CD8-positive, alpha-beta T cell (primary cell): ENCODE measurements at regions of chr20 and their contacts with region 1.

Region 1: DNA sequence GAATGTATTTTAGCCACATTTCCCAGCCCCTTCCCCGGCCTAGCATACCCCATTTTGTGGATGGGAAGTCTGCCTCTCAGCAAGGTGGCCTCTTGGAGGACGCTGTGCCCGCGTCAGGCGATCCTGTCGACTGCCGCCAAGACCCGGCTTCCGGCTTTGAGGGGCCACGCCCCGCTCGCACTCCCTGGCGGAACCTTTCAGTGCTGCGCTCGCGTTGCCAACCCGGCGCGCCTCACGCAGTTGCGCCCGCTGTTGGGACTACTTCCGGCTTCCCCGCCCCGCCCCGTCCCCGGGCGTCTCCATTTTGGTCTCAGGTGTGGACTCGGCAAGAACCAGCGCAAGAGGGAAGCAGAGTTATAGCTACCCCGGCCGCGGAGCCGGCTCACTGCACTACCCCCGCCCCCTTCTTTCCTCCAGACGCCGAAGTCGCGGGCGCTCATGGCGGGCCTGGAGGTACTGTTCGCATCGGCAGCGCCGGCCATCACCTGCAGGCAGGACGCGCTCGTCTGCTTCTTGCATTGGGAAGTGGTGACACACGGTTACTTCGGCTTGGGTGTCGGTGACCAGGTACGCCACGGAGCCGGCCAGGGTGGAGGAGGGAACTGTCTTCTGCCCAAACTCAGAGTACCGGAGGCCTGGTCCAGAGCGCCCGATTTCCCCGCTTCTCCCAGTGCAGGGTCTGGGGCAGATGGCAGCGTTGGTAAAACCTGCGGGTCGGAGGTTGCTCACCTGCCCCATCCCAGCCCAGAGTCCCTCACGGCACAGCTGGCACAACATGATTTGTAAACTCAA is at the start of gene PSMF1:
- DNase-seq: peak; percentile 91 to 98 (median 96)
- ATAC-seq: peak; percentile 89
- H3K4me3 ChIP-seq: peak within 1 kb of the TSS; percentile 84 to 98
- H3K4me3 Mint-ChIP-seq: peak within 1 kb of the TSS; percentile 92
- H3K27ac ChIP-seq: peak within 1 kb of the TSS; percentile 71 to 87
- H3K27ac Mint-ChIP-seq: peak within 1 kb of the TSS; percentile 93
- H3K4me1 ChIP-seq: peaks cover 49% of the 10 kb centered on the region
- H3K4me1 Mint-ChIP-seq: peaks cover 61% of the 10 kb centered on the region
- H3K27me3 ChIP-seq: no peaks in the 10 kb centered on the region
- H3K27me3 Mint-ChIP-seq: no peaks in the 10 kb centered on the region
- CTCF ChIP-seq: no peak
- total RNA-seq, gene PSMF1: 86.4 to 87.8 TPM

Region 2: DNA sequence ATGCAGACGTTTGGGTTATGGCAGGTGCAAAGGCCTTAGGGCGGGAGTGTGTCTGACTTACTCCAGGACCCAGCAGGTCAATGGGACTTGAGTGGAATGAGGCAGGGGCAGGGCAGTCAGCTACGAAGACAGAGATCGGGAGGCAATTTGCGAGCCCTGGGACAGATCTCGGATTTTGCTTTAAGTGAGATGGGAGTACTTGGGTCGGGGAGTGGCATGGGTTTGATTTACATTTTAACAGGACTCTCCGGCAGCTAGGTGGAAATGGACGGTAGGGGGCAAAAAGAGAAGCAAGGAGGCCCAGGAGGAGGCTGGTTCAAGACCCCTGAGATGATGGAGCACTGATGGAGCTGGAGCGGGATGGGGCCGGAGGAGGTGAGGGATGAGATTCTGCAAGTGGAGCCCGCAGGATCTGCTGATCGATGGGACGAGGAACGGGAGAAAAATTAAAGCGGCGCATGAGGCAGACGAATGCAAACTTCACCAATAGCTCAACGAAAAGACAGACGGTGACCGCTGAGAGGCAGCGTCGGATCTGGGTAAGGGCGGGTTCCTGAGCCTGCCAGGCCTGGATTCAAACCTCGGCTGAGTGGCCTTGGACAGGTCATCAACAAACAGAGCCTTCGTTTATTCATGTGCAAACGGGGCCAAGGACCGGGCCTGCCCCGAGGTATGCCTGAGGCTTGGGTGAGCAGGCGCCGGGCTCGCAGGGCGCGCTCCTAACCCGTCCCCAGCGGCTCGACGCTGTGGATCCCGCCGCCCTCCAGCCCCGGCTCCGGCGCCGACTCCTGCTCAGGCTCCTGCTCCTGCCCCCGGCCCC is 711.2 kb before region 1 on chr20:
- CTCF ChIA-PET with region 1: no interaction called
- POLR2A ChIA-PET with region 1: no interaction called
- intact Hi-C with region 1: loop called (anchors 5 to 10 kb)
- DNase-seq: peak in 7 of 9 experiments; percentile 48 to 83 (median 68)
- ATAC-seq: peak; percentile 71
- H3K4me3 ChIP-seq: peak overlapping the region; percentile 56 to 71
- H3K4me3 Mint-ChIP-seq: peak overlapping the region; percentile 91
- H3K27ac ChIP-seq: peak overlapping the region; percentile 9 to 41
- H3K27ac Mint-ChIP-seq: peak overlapping the region; percentile 95
- H3K4me1 ChIP-seq: peaks cover 34% of the 10 kb centered on the region
- H3K4me1 Mint-ChIP-seq: peaks cover 47% of the 10 kb centered on the region
- H3K27me3 ChIP-seq: no peaks in the 10 kb centered on the region
- H3K27me3 Mint-ChIP-seq: no peaks in the 10 kb centered on the region
- CTCF ChIP-seq: peak; percentile 45

Region 3: GRCh38 chr20:833450-834150 is 284.9 kb before region 1 on chr20 and contains the start of gene FAM110A:
- CTCF ChIA-PET with region 1: no interaction called
- POLR2A ChIA-PET with region 1: no interaction called
- intact Hi-C with region 1: loop called (anchors 1 kb)
- DNase-seq: peak; percentile 89 to 99 (median 96)
- ATAC-seq: peak; percentile 96
- H3K4me3 ChIP-seq: peak within 1 kb of the TSS; percentile 90 to 96
- H3K4me3 Mint-ChIP-seq: peak within 1 kb of the TSS; percentile 91
- H3K27ac ChIP-seq: peak within 1 kb of the TSS; percentile 85 to 96
- H3K27ac Mint-ChIP-seq: peak within 1 kb of the TSS; percentile 82
- H3K4me1 ChIP-seq: peaks cover 27% of the 10 kb centered on the region
- H3K4me1 Mint-ChIP-seq: peaks cover 43% of the 10 kb centered on the region
- H3K27me3 ChIP-seq: no peaks in the 10 kb centered on the region
- H3K27me3 Mint-ChIP-seq: no peaks in the 10 kb centered on the region
- CTCF ChIP-seq: no peak
- total RNA-seq, gene FAM110A: 6.7 to 7.7 TPM

Region 4: DNA sequence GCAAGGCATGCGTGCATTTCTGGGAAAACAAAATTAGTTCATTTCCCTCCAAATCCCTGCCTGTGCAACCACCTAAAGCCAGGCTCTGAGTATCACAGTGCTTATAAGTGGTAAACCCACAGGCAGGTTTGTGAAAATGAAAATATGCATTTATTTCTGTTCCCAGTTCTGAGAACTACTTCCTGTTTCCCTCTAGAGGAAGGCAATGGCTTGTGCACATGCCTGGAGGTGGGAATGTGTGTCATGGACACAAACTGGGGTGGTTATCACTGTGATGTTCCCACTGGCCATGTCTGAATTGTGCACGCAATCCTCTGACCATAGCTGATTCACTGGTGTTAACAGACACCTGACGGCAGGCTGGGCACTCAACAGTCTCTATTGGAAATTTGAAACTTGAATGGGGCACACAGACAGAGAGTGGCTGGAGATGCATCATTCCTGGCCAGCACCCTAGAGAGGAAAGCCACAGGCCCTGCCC is 258.7 kb before region 1 on chr20:
- CTCF ChIA-PET with region 1: no interaction called
- POLR2A ChIA-PET with region 1: no interaction called
- intact Hi-C with region 1: no loop called
- DNase-seq: no peak
- ATAC-seq: no peak
- H3K4me3 ChIP-seq: no peak overlapping the region
- H3K4me3 Mint-ChIP-seq: no peak overlapping the region
- H3K27ac ChIP-seq: no peak overlapping the region
- H3K27ac Mint-ChIP-seq: no peak overlapping the region
- H3K4me1 ChIP-seq: peaks cover 29% of the 10 kb centered on the region
- H3K4me1 Mint-ChIP-seq: peaks cover 40% of the 10 kb centered on the region
- H3K27me3 ChIP-seq: no peaks in the 10 kb centered on the region
- H3K27me3 Mint-ChIP-seq: no peaks in the 10 kb centered on the region
- CTCF ChIP-seq: no peak

Region 5: GRCh38 chr20:1108437-1108920 is 10.1 kb before region 1 on chr20:
- CTCF ChIA-PET with region 1: interaction called, 15 read pairs
- POLR2A ChIA-PET with region 1: interaction called, 4 read pairs
- intact Hi-C with region 1: no loop called
- DNase-seq: peak; percentile 22 to 70 (median 52)
- ATAC-seq: peak; percentile 82
- H3K4me3 ChIP-seq: no peak overlapping the region
- H3K4me3 Mint-ChIP-seq: no peak overlapping the region
- H3K27ac ChIP-seq: no peak overlapping the region
- H3K27ac Mint-ChIP-seq: no peak overlapping the region
- H3K4me1 ChIP-seq: no peaks in the 10 kb centered on the region
- H3K4me1 Mint-ChIP-seq: peaks cover 4% of the 10 kb centered on the region
- H3K27me3 ChIP-seq: no peaks in the 10 kb centered on the region
- H3K27me3 Mint-ChIP-seq: no peaks in the 10 kb centered on the region
- CTCF ChIP-seq: peak; percentile 62

Region 6: DNA sequence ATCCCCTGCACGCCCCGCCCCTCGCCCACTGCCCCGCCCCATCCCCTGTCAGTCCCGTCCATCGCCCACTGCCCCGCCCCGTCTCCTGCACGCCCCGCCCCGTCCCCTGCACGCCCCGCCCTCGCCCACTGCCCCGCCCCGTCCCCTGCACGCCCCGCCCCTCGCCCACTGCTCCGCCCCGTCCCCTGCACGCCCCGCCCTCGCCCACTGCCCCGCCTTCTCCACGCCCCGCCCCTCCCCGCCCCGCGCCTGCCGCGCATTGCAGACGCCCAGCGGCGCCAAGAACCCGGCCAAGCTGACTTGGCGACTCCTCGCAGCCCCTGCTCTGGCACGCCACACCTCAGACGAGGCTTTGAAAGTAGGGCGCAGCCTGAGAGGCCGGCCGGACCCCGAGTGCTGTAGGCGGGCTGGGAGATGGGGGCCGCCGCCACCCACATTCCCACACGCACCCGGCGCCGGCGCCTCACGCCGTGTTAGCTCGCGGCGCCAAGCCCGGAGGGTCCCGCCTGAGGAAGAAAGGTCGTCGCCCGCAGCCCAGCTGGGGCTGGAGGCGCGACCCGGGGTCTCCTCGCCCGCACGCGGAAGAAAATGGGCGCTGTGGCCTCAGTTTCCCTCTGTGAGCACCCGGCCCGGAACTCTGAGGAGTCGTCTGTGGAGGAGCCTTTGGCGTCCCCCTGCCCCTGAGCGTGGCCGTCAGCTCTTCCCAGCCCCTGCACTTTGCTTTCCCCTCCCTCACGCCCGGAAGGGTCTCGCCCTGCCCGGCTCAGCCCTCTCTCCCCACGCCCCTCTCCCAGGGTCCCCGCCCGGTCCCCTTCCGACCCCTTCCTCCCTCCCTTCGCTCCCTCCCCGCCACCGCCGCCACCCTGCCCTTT is 107.5 kb after region 1 on chr20 and contains the start of gene RAD21L1:
- CTCF ChIA-PET with region 1: no interaction called
- POLR2A ChIA-PET with region 1: no interaction called
- intact Hi-C with region 1: loop called (anchors 1 to 2 kb)
- DNase-seq: peak; percentile 63 to 85 (median 80)
- ATAC-seq: peak; percentile 93
- H3K4me3 ChIP-seq: peak within 1 kb of the TSS; percentile 64 to 82
- H3K4me3 Mint-ChIP-seq: peak within 1 kb of the TSS; percentile 87
- H3K27ac ChIP-seq: peak within 1 kb of the TSS in 1 of 2 experiments; percentile 44
- H3K27ac Mint-ChIP-seq: no peak within 1 kb of the TSS
- H3K4me1 ChIP-seq: peaks cover 9% of the 10 kb centered on the region
- H3K4me1 Mint-ChIP-seq: peaks cover 18% of the 10 kb centered on the region
- H3K27me3 ChIP-seq: peaks cover 0 to 8% of the 10 kb centered on the region in 2 experiments
- H3K27me3 Mint-ChIP-seq: peaks cover 13% of the 10 kb centered on the region
- CTCF ChIP-seq: no peak
- total RNA-seq, gene RAD21L1: not detected

Region 7: DNA sequence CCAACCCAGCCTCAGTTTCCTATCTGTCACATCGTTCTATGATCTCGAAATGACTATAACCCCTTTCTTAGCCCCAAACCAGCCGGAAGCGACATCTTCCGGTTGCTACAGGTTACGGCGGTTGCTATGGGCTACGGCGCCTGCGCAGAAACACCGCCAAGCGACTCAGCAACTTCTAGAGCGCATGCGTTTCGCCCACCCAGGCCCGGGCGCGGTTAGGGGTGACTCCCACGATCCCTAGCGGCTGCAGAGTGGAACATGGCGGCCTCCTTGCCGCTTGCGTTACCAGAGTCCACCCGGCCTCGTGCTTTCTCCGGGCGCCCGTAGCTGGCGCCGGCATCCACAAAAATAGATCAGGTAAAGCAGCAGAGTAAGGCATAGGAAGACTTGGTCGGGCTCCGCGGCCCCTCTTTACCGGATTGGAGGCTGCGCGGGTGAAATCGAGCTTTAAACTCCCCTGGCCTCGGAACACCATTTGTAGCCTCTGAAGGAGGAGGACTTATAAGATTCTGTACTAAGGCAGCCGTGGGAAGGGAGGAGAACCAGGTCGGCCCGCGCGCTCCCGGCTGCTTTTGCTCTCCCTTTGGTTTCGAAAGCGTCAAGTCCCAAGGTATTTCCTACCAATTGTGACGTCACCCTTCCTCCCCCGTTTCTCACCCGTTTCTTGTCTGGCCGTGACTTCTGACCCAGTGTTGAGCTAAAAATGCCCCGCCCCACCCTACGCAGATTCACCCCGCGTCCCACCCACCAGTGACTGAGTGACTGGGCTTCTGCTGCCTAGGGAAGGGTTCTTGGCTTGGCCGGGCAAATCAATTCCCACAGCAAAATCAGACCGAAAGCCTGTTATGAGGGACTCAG is 206.9 kb after region 1 on chr20:
- CTCF ChIA-PET with region 1: no interaction called
- POLR2A ChIA-PET with region 1: no interaction called
- intact Hi-C with region 1: loop called (anchors 1 kb)
- DNase-seq: peak; percentile 98 to 100 (median 99)
- ATAC-seq: peak; percentile 86
- H3K4me3 ChIP-seq: peak overlapping the region; percentile 81 to 97
- H3K4me3 Mint-ChIP-seq: no peak overlapping the region
- H3K27ac ChIP-seq: peak overlapping the region; percentile 94 to 99
- H3K27ac Mint-ChIP-seq: no peak overlapping the region
- H3K4me1 ChIP-seq: peaks cover 38% of the 10 kb centered on the region
- H3K4me1 Mint-ChIP-seq: peaks cover 20% of the 10 kb centered on the region
- H3K27me3 ChIP-seq: no peaks in the 10 kb centered on the region
- H3K27me3 Mint-ChIP-seq: no peaks in the 10 kb centered on the region
- CTCF ChIP-seq: no peak

Region 8: GRCh38 chr20:2101865-2102584 is 983.5 kb after region 1 on chr20:
- CTCF ChIA-PET with region 1: no interaction called
- POLR2A ChIA-PET with region 1: no interaction called
- intact Hi-C with region 1: loop called (anchors 2 to 5 kb)
- DNase-seq: peak; percentile 79 to 95 (median 91)
- ATAC-seq: peak; percentile 75
- H3K4me3 ChIP-seq: peak overlapping the region; percentile 79 to 100
- H3K4me3 Mint-ChIP-seq: peak overlapping the region; percentile 95
- H3K27ac ChIP-seq: peak overlapping the region; percentile 98 to 100
- H3K27ac Mint-ChIP-seq: peak overlapping the region; percentile 100
- H3K4me1 ChIP-seq: peaks cover 48% of the 10 kb centered on the region
- H3K4me1 Mint-ChIP-seq: peaks cover 41% of the 10 kb centered on the region
- H3K27me3 ChIP-seq: no peaks in the 10 kb centered on the region
- H3K27me3 Mint-ChIP-seq: no peaks in the 10 kb centered on the region
- CTCF ChIP-seq: no peak